ENCODE measurements at regions of chr11 and their contacts with region 1.

Region 1: GRCh38 chr11:73661035-73661628 is 14.8 kb downstream of the PLEKHB1 start:
- DNase-seq: peak; percentile 88 to 94 (median 89)
- ATAC-seq: peak; percentile 88 to 97 (median 96)
- H3K4me3 ChIP-seq: peak overlapping the region in 10 of 12 donors; percentile 23 to 56 (median 41)
- H3K27ac ChIP-seq: no peak overlapping the region
- H3K4me1 ChIP-seq: peaks cover 0 to 43% (median 27%) of the 10 kb centered on the region in 12 donors
- H3K27me3 ChIP-seq: no peaks in the 10 kb centered on the region
- CTCF ChIP-seq: peak; percentile 93 to 99 (median 98)
- POLR2A ChIP-seq: no peak

Region 2: DNA sequence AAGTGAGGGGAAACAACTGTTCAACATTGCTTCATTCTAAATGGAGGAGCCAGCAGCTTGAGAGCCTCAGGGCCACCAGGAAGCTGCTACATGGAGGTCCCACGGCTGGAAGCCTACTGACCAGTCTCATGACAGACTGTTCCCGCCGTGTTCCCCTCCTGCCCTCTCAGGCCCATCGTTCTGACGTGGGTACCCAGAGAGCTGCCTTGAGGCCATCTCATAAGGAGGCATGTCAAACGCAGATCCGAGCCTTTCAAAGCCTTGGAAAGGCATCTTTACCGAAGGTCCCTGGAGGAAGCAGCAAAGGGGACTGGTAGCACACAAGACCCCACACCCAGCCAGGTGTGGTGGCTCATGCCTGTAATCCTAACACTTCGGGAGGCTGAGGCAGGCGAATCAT is 361.4 kb before region 1 on chr11:
- intact Hi-C with region 1: no loop called
- DNase-seq: peak in 2 of 5 donors; percentile 10 to 20
- ATAC-seq: no peak
- H3K4me3 ChIP-seq: no peak overlapping the region
- H3K27ac ChIP-seq: no peak overlapping the region
- H3K4me1 ChIP-seq: peaks cover 0 to 10% (median 1%) of the 10 kb centered on the region in 12 donors
- H3K27me3 ChIP-seq: no peaks in the 10 kb centered on the region
- CTCF ChIP-seq: no peak
- POLR2A ChIP-seq: no peak

Region 3: DNA sequence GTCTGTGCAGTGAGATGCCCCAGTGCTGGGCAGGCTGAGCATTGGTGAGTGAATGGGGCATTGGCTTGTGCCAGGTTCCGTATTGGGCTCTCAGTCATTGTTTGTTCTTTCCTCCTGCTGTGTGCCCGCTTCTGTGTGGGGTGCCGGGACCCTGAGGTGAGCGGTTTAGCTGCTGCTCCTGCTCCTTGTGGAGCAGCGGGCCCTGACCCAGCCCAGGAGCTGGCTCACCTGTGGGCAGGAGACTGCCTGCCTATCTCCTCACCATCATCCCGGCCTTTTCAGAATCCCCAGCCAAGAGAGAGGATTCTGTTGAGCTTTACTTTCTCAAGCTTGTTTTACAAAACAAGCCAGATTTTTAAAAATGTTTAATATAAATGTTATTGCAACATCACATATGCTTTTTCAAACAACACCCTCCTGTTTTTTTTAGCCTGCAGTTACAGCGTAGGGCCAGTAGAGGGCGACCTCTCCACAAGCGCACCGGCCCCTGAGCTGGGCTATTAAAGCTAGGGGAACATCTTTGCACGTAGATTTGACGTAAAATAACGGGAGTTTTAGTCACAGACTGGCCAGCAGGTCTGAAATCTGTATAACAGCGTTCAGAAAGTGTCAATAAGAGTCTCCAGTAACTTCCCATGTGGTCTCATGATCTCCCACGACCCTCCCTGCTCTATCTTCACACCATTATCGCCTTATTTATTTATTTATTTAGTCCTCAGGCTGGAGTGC is 310.1 kb before region 1 on chr11:
- intact Hi-C with region 1: loop called in 6 of 10 experiments (anchors 1 to 5 kb)
- DNase-seq: peak in 2 of 5 donors; percentile 54 to 55
- ATAC-seq: peak; percentile 27 to 52 (median 37)
- H3K4me3 ChIP-seq: no peak overlapping the region
- H3K27ac ChIP-seq: peak overlapping the region in 1 of 12 donors; percentile 49
- H3K4me1 ChIP-seq: peaks cover 0 to 21% (median 3%) of the 10 kb centered on the region in 12 donors
- H3K27me3 ChIP-seq: no peaks in the 10 kb centered on the region
- CTCF ChIP-seq: peak in 11 of 12 donors; percentile 95 to 99 (median 98)
- POLR2A ChIP-seq: no peak

Region 4: GRCh38 chr11:73376160-73376802 is 284.9 kb before region 1 on chr11 and contains the start of gene RELT:
- intact Hi-C with region 1: loop called in 1 of 10 experiments (anchors 10 kb)
- DNase-seq: peak; percentile 89 to 96 (median 91)
- ATAC-seq: peak; percentile 73 to 91 (median 90)
- H3K4me3 ChIP-seq: peak within 1 kb of the TSS; percentile 58 to 92 (median 73)
- H3K27ac ChIP-seq: peak within 1 kb of the TSS in 11 of 12 donors; percentile 52 to 92 (median 82)
- H3K4me1 ChIP-seq: peaks cover 0 to 59% (median 39%) of the 10 kb centered on the region in 12 donors
- H3K27me3 ChIP-seq: no peaks in the 10 kb centered on the region
- CTCF ChIP-seq: peak; percentile 77 to 98 (median 93)
- POLR2A ChIP-seq: peak; percentile 68 to 97
- total RNA-seq, gene RELT: 1.0 to 13.9 (median 2.6) TPM

Region 5: GRCh38 chr11:73625696-73626318 is 35.3 kb before region 1 on chr11:
- intact Hi-C with region 1: loop called (anchors 1 to 2 kb)
- DNase-seq: peak; percentile 64 to 76 (median 74)
- ATAC-seq: peak in 3 of 4 donors; percentile 82 to 87 (median 86)
- H3K4me3 ChIP-seq: peak overlapping the region in 2 of 12 donors; percentile 13 to 22
- H3K27ac ChIP-seq: no peak overlapping the region
- H3K4me1 ChIP-seq: peaks cover 0 to 37% (median 5%) of the 10 kb centered on the region in 12 donors
- H3K27me3 ChIP-seq: no peaks in the 10 kb centered on the region
- CTCF ChIP-seq: peak; percentile 83 to 96 (median 94)
- POLR2A ChIP-seq: no peak

Measured in heart left ventricle (tissue), 16 donors.